CD4-positive, alpha-beta memory T cell (primary cell): ENCODE measurements at regions of chr16 and their contacts with region 1.

Region 1: GRCh38 chr16:1782352-1783091 is at the starts of genes NUBP2 and SPSB3:
- DNase-seq: peak; percentile 97 to 99 (median 99)
- H3K4me3 ChIP-seq: peak within 1 kb of the TSS; percentile 69 to 88
- H3K4me3 Mint-ChIP-seq: peak within 1 kb of the TSS; percentile 91 to 96 (median 94)
- H3K27ac ChIP-seq: peak within 1 kb of the TSS; percentile 79
- H3K27ac Mint-ChIP-seq: peak within 1 kb of the TSS; percentile 92 to 97 (median 94)
- H3K4me1 ChIP-seq: peaks cover 43% of the 10 kb centered on the region
- H3K4me1 Mint-ChIP-seq: peaks cover 13 to 46% (median 30%) of the 10 kb centered on the region in 4 donors
- H3K27me3 ChIP-seq: no peaks in the 10 kb centered on the region
- H3K27me3 Mint-ChIP-seq: no peaks in the 10 kb centered on the region
- total RNA-seq, gene NUBP2: 55.9 to 59.4 TPM
- total RNA-seq, gene SPSB3: 133 to 144 TPM

Region 2: GRCh38 chr16:1677802-1678496 is 104.6 kb before region 1 on chr16 and contains the start of gene JPT2:
- CTCF ChIA-PET with region 1: no interaction called
- POLR2A ChIA-PET with region 1: interaction called, 16 read pairs
- intact Hi-C with region 1: no loop called
- DNase-seq: peak; percentile 93 to 95 (median 95)
- H3K4me3 ChIP-seq: peak within 1 kb of the TSS; percentile 46 to 73
- H3K4me3 Mint-ChIP-seq: peak within 1 kb of the TSS; percentile 86 to 94 (median 90)
- H3K27ac ChIP-seq: peak within 1 kb of the TSS; percentile 70
- H3K27ac Mint-ChIP-seq: peak within 1 kb of the TSS; percentile 77 to 95 (median 86)
- H3K4me1 ChIP-seq: peaks cover 28% of the 10 kb centered on the region
- H3K4me1 Mint-ChIP-seq: peaks cover 13 to 49% (median 29%) of the 10 kb centered on the region in 4 donors
- H3K27me3 ChIP-seq: no peaks in the 10 kb centered on the region
- H3K27me3 Mint-ChIP-seq: no peaks in the 10 kb centered on the region
- total RNA-seq, gene JPT2: 38.1 to 43.1 TPM

Region 3: DNA sequence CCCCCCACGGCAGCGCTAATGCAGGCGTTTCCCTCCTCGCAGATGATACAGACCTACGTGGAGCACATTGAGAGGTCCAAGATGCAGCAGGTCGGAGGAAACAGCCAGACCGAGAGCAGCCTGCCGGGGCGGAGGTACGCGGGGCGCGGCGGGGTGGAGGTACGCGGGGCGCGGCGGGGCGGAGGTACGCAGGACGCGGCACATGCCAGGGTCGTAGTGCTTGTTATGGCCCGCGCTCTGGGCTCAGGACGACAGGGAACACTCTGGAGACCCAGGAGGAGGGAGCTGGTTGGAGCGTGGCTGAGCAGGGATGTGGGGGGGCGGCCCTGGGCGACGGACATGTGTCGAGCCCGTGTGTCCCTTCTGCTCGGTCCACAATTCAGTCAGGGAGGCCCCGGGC is 53.1 kb before region 1 on chr16:
- CTCF ChIA-PET with region 1: no interaction called
- POLR2A ChIA-PET with region 1: no interaction called
- intact Hi-C with region 1: no loop called
- DNase-seq: no peak
- H3K4me3 ChIP-seq: no peak overlapping the region
- H3K4me3 Mint-ChIP-seq: no peak overlapping the region
- H3K27ac ChIP-seq: no peak overlapping the region
- H3K27ac Mint-ChIP-seq: no peak overlapping the region
- H3K4me1 ChIP-seq: no peaks in the 10 kb centered on the region
- H3K4me1 Mint-ChIP-seq: peaks cover 0 to 7% (median 6%) of the 10 kb centered on the region in 4 donors
- H3K27me3 ChIP-seq: no peaks in the 10 kb centered on the region
- H3K27me3 Mint-ChIP-seq: no peaks in the 10 kb centered on the region

Region 4: GRCh38 chr16:1826691-1827575 is 44.4 kb after region 1 on chr16 and contains the starts of genes FAHD1 and HAGH:
- CTCF ChIA-PET with region 1: interaction called, 5 read pairs
- POLR2A ChIA-PET with region 1: interaction called, 43 read pairs
- intact Hi-C with region 1: loop called (anchors 1 kb)
- DNase-seq: peak; percentile 90 to 98 (median 93)
- H3K4me3 ChIP-seq: peak within 1 kb of the TSS; percentile 78 to 89
- H3K4me3 Mint-ChIP-seq: peak within 1 kb of the TSS; percentile 92 to 96 (median 94)
- H3K27ac ChIP-seq: peak within 1 kb of the TSS; percentile 73
- H3K27ac Mint-ChIP-seq: peak within 1 kb of the TSS; percentile 94 to 97 (median 95)
- H3K4me1 ChIP-seq: peaks cover 43% of the 10 kb centered on the region
- H3K4me1 Mint-ChIP-seq: peaks cover 17 to 58% (median 39%) of the 10 kb centered on the region in 4 donors
- H3K27me3 ChIP-seq: no peaks in the 10 kb centered on the region
- H3K27me3 Mint-ChIP-seq: no peaks in the 10 kb centered on the region
- total RNA-seq, gene FAHD1: 7.8 to 9.6 TPM
- total RNA-seq, gene HAGH: 73.7 to 77.8 TPM

Region 5: GRCh38 chr16:2682209-2683021 is 899.9 kb after region 1 on chr16 and contains the start of gene KCTD5:
- CTCF ChIA-PET with region 1: no interaction called
- POLR2A ChIA-PET with region 1: no interaction called
- intact Hi-C with region 1: no loop called
- DNase-seq: peak; percentile 94 to 95 (median 94)
- H3K4me3 ChIP-seq: peak within 1 kb of the TSS; percentile 96 to 98
- H3K4me3 Mint-ChIP-seq: peak within 1 kb of the TSS; percentile 92 to 97 (median 94)
- H3K27ac ChIP-seq: peak within 1 kb of the TSS; percentile 79
- H3K27ac Mint-ChIP-seq: peak within 1 kb of the TSS; percentile 87 to 96 (median 95)
- H3K4me1 ChIP-seq: peaks cover 34% of the 10 kb centered on the region
- H3K4me1 Mint-ChIP-seq: peaks cover 15 to 30% (median 24%) of the 10 kb centered on the region in 4 donors
- H3K27me3 ChIP-seq: no peaks in the 10 kb centered on the region
- H3K27me3 Mint-ChIP-seq: no peaks in the 10 kb centered on the region
- total RNA-seq, gene KCTD5: 26.7 to 27.1 TPM